ENCODE measurements at regions of chr1 and their contacts with region 1.

Region 1: DNA sequence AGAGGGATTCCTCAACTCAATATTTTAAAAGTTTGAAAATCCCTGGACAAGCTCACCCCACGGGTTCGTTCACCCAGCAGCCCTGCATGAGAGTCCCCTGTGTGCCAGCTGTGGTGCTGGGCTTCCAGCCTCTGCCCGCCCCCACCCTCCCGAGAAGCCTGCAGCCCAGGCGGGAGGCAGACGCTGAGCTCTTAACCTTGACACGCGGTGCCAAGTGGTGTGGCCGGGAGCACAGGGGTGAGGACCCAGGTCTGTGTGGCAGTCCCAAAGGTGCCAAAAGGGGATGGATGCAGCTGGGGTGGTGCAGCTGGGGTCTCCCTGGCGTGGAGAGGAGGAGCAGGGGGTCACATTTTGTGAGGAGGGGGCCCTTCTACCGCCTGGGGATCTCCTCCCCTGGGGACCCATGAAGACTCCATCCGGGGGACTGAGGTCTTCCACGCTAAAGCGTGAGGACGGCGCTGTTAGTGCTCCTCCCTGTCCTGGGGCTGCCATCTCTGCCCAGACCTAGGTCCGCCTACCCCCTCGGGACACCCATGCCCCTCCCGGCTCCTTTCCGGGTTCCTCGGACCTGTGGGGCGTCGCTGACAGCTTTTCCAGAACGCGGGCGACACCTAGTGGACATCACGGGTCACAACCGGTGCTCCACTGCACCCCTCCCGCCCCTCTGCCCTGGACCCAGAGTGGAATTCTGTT is 12.9 kb downstream of the PLA2G2F start:
- DNase-seq: peak; percentile 94
- H3K4me3 ChIP-seq: peak overlapping the region in 7 of 8 donors; percentile 25 to 65 (median 36)
- H3K27ac ChIP-seq: peak overlapping the region in 6 of 8 donors; percentile 64 to 79 (median 70)
- H3K4me1 ChIP-seq: peaks cover 3 to 45% (median 30%) of the 10 kb centered on the region in 6 donors
- H3K27me3 ChIP-seq: no peaks in the 10 kb centered on the region
- CTCF ChIP-seq: peak; percentile 89 to 97 (median 95)
- POLR2A ChIP-seq: no peak

Region 2: GRCh38 chr1:19974822-19975416 is 177.1 kb before region 1 on chr1:
- intact Hi-C with region 1: loop called (anchors 5 kb)
- DNase-seq: no peak
- H3K4me3 ChIP-seq: no peak overlapping the region
- H3K27ac ChIP-seq: no peak overlapping the region
- H3K4me1 ChIP-seq: peaks cover 0 to 7% (median 0%) of the 10 kb centered on the region in 6 donors
- H3K27me3 ChIP-seq: peaks cover 0 to 28% (median 0%) of the 10 kb centered on the region in 7 donors
- CTCF ChIP-seq: peak; percentile 37 to 76 (median 56)
- POLR2A ChIP-seq: no peak

Region 3: DNA sequence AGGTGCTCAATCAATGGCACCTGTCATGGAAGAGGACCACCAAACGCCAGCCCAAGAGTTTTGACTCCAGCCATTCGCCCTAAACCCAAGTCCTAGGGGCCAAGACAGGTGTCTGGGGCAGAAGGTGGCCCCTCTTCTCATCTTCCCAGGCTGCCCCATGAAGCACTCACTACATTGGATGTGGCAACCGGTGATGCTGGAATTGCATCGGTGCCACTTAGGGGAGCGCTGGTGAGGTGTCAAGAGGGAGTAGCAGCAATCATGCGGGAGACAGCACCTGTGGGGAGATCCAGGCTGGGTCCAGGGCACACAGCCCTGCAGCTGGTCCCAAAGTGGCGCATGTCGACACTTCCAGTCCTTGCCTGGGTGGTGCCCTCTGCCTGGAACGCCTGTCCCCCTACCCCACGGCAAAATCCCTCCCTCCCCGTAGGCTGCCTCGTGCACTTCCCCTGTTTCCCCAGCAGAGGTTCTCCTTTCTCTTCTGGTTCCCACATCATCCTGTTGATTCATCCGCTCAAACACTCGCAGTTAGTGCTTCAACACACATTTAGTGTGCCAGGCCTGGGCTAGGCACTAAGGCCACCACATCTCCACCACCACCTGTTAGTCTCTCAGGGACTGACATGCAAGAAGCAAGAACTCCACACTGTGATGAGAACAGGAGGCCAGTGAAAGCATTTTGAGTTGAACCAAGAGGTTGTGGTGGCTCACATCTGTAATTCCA is 51.3 kb before region 1 on chr1:
- intact Hi-C with region 1: loop called (anchors 5 kb)
- DNase-seq: no peak
- H3K4me3 ChIP-seq: no peak overlapping the region
- H3K27ac ChIP-seq: no peak overlapping the region
- H3K4me1 ChIP-seq: peaks cover 0 to 9% (median 3%) of the 10 kb centered on the region in 6 donors
- H3K27me3 ChIP-seq: peaks cover 0 to 5% (median 0%) of the 10 kb centered on the region in 7 donors
- CTCF ChIP-seq: peak; percentile 53 to 95 (median 85)
- POLR2A ChIP-seq: no peak